BJ (cell line): ENCODE measurements at regions of chr2 and their contacts with region 1.

Region 1: GRCh38 chr2:228039752-228040534 is 141.5 kb downstream of the SPHKAP start:
- DNase-seq: no peak
- H3K4me3 ChIP-seq: no peak overlapping the region
- H3K27me3 ChIP-seq: no peaks in the 10 kb centered on the region
- CTCF ChIP-seq: peak; percentile 69

Region 2: DNA sequence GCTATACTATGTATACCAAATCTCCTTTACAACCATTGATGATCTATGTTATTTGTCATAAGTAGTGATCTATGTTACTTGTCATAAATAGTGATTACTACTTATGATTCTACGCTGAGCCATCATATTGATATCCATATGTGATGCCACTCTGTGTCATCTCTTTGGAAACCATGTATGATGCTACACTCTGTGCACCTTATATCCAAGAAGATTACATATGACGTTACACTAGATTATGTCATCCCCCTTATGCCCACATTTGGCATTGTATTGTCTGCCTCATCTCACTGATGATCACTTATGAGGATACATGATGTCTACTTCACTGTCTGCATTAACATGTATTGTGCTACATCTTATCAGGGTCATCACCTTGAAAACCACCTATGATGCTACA is 125.6 kb before region 1 on chr2:
- CTCF ChIA-PET with region 1: no interaction called
- POLR2A ChIA-PET with region 1: no interaction called
- DNase-seq: no peak
- H3K4me3 ChIP-seq: no peak overlapping the region
- H3K27me3 ChIP-seq: no peaks in the 10 kb centered on the region
- CTCF ChIP-seq: no peak

Region 3: GRCh38 chr2:228023619-228024018 is 16.3 kb before region 1 on chr2:
- CTCF ChIA-PET with region 1: interaction called, 11 read pairs
- POLR2A ChIA-PET with region 1: no interaction called
- DNase-seq: no peak
- H3K4me3 ChIP-seq: no peak overlapping the region
- H3K27me3 ChIP-seq: no peaks in the 10 kb centered on the region
- CTCF ChIP-seq: no peak